ENCODE measurements at regions of chr1 and their contacts with region 1.

Region 1: GRCh38 chr1:40143891-40144575 is 17.2 kb upstream of the RLF start:
- DNase-seq: peak; percentile 67 to 73
- H3K4me3 ChIP-seq: no peak overlapping the region
- H3K27ac ChIP-seq: no peak overlapping the region
- H3K4me1 ChIP-seq: peaks cover 55% of the 10 kb centered on the region
- H3K27me3 ChIP-seq: no peaks in the 10 kb centered on the region
- CTCF ChIP-seq: peak; percentile 84

Region 2: GRCh38 chr1:40096977-40097782 is 46.9 kb before region 1 on chr1 and contains the start of gene PPT1:
- CTCF ChIA-PET with region 1: interaction called, 9 read pairs
- POLR2A ChIA-PET with region 1: interaction called, 6 read pairs
- intact Hi-C with region 1: loop called (anchors 1 kb)
- DNase-seq: peak; percentile 66 to 80
- H3K4me3 ChIP-seq: peak within 1 kb of the TSS; percentile 92
- H3K27ac ChIP-seq: peak within 1 kb of the TSS; percentile 40; the same call in 1 of the 2 replicates
- H3K4me1 ChIP-seq: peaks cover 47% of the 10 kb centered on the region
- H3K27me3 ChIP-seq: no peaks in the 10 kb centered on the region
- CTCF ChIP-seq: no peak
- total RNA-seq, gene PPT1: 120 and 154 TPM in 2 replicates

Region 3: DNA sequence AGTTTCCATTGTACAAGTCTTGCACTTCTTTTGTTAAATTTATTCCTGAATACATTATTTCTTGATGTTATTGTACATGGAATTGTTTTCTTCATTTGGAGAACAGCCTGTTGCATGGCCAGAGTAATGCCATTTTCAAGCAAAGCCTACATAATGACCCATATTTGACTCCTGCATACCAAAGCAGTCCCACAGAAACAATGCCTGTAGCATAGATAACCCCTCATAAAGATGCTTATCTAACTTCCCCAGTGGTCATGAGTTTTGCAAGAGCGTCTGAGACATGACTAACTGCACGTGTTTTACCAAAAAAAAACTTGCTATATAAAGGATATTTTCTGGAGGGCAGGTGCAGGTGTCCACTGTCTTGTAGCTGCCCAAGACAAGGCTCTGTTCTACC is 13.1 kb before region 1 on chr1:
- CTCF ChIA-PET with region 1: interaction called, 3 read pairs
- POLR2A ChIA-PET with region 1: interaction called, 3 read pairs
- intact Hi-C with region 1: loop called (anchors 1 kb)
- DNase-seq: peak; percentile 35 to 96
- H3K4me3 ChIP-seq: no peak overlapping the region
- H3K27ac ChIP-seq: peak overlapping the region; percentile 60
- H3K4me1 ChIP-seq: peaks cover 20% of the 10 kb centered on the region
- H3K27me3 ChIP-seq: no peaks in the 10 kb centered on the region
- CTCF ChIP-seq: no peak

Region 4: GRCh38 chr1:40178200-40178599 is 34.2 kb after region 1 on chr1:
- CTCF ChIA-PET with region 1: no interaction called
- POLR2A ChIA-PET with region 1: no interaction called
- intact Hi-C with region 1: no loop called
- DNase-seq: no peak
- H3K4me3 ChIP-seq: no peak overlapping the region
- H3K27ac ChIP-seq: no peak overlapping the region
- H3K4me1 ChIP-seq: no peaks in the 10 kb centered on the region
- H3K27me3 ChIP-seq: no peaks in the 10 kb centered on the region
- CTCF ChIP-seq: no peak

Region 5: DNA sequence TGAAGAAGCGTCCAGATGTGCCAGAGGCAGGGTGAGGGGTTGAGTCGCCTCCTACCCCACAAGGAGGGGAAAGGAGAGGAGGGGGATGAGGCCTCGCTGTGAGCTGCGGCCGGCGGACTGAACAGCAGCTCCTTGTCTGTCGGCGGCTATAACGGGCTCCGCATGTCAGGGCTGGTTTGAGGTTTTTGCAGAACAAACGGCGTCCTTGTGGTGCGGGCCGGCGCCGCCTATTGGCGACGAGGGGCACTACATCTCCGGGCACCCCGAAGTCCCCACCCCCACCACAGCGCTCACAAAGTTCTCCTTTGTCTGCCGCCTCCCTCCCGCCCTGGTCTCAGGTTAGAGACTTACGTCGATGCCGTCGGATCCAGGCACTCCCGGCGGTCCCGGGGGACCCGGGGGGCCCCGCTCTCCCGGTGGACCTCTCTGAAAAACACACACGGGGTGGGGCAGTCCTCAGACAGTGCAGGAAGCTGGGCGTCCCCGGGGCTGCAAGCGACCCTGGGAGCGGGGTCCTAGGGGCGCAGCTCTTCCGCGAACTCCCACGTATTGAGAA is 171.3 kb after region 1 on chr1:
- CTCF ChIA-PET with region 1: interaction called, 3 read pairs
- POLR2A ChIA-PET with region 1: no interaction called
- intact Hi-C with region 1: loop called (anchors 5 kb)
- DNase-seq: peak in 1 of 2 experiments; percentile 78
- H3K4me3 ChIP-seq: no peak overlapping the region
- H3K27ac ChIP-seq: no peak overlapping the region
- H3K4me1 ChIP-seq: peaks cover 14% of the 10 kb centered on the region
- H3K27me3 ChIP-seq: peaks cover 16% of the 10 kb centered on the region
- CTCF ChIP-seq: peak; percentile 85

Region 6: DNA sequence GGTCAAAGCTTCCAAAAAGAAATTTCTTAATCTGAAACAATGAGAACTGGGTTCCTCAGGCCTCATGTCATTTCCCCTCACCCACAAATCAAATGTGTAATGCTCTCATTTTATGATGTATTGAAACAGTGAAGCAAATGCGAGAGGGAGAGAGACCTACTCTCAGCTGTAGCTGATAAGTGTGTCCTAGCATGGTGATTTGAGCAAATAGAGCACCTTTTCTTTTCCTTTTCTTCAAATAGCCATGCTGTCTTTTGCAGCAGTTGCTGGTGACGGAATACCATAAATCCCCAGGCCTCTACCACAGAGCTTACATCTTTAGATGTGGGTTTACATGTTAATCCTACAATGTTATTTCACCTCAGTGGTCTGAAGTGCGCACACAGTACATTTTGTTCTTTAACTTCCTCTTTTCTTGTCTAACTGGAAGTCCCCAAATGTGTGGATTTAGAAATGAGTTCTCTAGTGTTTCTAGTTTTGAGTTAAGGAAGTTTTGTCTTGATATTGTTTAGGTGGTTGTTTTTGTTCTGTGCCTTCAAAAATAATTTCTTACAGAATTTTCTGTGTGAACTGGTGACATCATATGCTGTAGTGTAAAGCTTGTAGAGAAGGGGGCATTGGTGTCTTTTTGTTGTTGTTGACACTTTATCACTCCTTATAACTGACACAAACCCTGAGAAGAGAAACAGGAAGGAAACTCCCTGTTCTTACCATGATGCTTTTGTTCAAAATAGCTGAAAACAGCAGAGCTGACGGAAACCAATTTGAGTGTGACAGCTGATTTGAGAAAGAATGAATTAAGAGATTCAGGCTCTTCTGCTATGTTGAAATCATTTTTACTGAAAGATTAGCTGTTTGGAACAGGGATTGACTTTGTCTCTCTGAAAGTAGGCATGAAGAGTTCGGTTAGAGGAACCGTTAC is 241.7 kb after region 1 on chr1:
- CTCF ChIA-PET with region 1: no interaction called
- POLR2A ChIA-PET with region 1: no interaction called
- intact Hi-C with region 1: no loop called
- DNase-seq: no peak
- H3K4me3 ChIP-seq: no peak overlapping the region
- H3K27ac ChIP-seq: no peak overlapping the region
- H3K4me1 ChIP-seq: no peaks in the 10 kb centered on the region
- H3K27me3 ChIP-seq: no peaks in the 10 kb centered on the region
- CTCF ChIP-seq: no peak

Region 7: GRCh38 chr1:40404670-40405462 is 260.8 kb after region 1 on chr1:
- CTCF ChIA-PET with region 1: interaction called, 14 read pairs
- POLR2A ChIA-PET with region 1: no interaction called
- intact Hi-C with region 1: loop called (anchors 1 kb)
- DNase-seq: peak; percentile 32 to 54
- H3K4me3 ChIP-seq: no peak overlapping the region
- H3K27ac ChIP-seq: no peak overlapping the region
- H3K4me1 ChIP-seq: no peaks in the 10 kb centered on the region; the same call in 1 of the 2 replicates
- H3K27me3 ChIP-seq: no peaks in the 10 kb centered on the region
- CTCF ChIP-seq: peak; percentile 91

Measured in PC-9 (cell line).